CD8-positive, alpha-beta T cell (primary cell): ENCODE measurements at regions of chr16 and their contacts with region 1.

Region 1: GRCh38 chr16:69565671-69566239 is at the start of gene NFAT5:
- DNase-seq: peak; percentile 83 to 97 (median 90)
- ATAC-seq: peak; percentile 82
- H3K4me3 ChIP-seq: peak within 1 kb of the TSS; percentile 78 to 91
- H3K4me3 Mint-ChIP-seq: peak within 1 kb of the TSS; percentile 96
- H3K27ac ChIP-seq: peak within 1 kb of the TSS; percentile 87 to 89
- H3K27ac Mint-ChIP-seq: peak within 1 kb of the TSS; percentile 98
- H3K4me1 ChIP-seq: peaks cover 36% of the 10 kb centered on the region
- H3K4me1 Mint-ChIP-seq: peaks cover 46% of the 10 kb centered on the region
- H3K27me3 ChIP-seq: no peaks in the 10 kb centered on the region
- H3K27me3 Mint-ChIP-seq: no peaks in the 10 kb centered on the region
- CTCF ChIP-seq: no peak
- total RNA-seq, gene NFAT5: 22.0 to 27.6 TPM

Region 2: DNA sequence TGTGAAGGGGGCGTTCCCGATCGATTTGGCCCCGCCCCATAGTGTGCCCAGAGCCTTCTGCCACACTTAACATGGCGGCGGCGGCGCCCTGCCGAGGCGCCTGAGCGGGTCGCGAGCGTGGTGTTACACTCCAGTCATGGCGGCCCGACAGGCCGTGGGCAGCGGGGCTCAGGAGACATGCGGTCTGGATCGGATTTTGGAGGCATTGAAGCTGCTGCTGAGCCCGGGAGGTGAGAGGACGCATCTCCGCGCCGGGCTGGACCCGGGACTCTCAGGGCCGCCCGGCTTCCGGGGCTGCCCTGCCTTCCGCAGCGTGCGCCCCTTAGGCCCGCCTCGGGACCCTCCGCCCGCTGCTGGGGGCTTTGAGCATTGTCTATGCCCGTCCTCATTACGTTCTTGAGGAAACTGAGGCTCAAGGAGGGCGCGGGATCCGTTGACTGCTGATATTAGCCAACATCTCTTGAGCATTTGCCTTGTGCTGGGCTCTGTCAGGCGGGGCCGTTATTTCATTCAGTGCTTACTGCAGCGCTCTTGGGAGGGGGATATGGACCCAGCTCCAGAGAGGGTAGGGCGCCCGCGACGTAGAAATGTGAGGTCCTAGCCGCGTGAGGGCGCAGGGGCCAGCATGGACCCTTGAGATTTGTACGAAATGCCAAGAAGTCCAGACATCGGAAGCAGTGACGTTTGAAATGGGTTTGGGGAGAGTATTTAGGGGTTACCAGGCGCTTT is 722.1 kb before region 1 on chr16 and contains the start of gene TANGO6:
- CTCF ChIA-PET with region 1: no interaction called
- POLR2A ChIA-PET with region 1: no interaction called
- intact Hi-C with region 1: loop called in 1 of 2 experiments (anchors 10 kb)
- DNase-seq: peak; percentile 81 to 93 (median 90)
- ATAC-seq: peak; percentile 95
- H3K4me3 ChIP-seq: peak within 1 kb of the TSS; percentile 86 to 94
- H3K4me3 Mint-ChIP-seq: peak within 1 kb of the TSS; percentile 92
- H3K27ac ChIP-seq: peak within 1 kb of the TSS; percentile 78 to 86
- H3K27ac Mint-ChIP-seq: peak within 1 kb of the TSS; percentile 89
- H3K4me1 ChIP-seq: peaks cover 24% of the 10 kb centered on the region
- H3K4me1 Mint-ChIP-seq: peaks cover 29% of the 10 kb centered on the region
- H3K27me3 ChIP-seq: no peaks in the 10 kb centered on the region
- H3K27me3 Mint-ChIP-seq: no peaks in the 10 kb centered on the region
- CTCF ChIP-seq: no peak
- total RNA-seq, gene TANGO6: 12.1 to 16.3 TPM

Region 3: DNA sequence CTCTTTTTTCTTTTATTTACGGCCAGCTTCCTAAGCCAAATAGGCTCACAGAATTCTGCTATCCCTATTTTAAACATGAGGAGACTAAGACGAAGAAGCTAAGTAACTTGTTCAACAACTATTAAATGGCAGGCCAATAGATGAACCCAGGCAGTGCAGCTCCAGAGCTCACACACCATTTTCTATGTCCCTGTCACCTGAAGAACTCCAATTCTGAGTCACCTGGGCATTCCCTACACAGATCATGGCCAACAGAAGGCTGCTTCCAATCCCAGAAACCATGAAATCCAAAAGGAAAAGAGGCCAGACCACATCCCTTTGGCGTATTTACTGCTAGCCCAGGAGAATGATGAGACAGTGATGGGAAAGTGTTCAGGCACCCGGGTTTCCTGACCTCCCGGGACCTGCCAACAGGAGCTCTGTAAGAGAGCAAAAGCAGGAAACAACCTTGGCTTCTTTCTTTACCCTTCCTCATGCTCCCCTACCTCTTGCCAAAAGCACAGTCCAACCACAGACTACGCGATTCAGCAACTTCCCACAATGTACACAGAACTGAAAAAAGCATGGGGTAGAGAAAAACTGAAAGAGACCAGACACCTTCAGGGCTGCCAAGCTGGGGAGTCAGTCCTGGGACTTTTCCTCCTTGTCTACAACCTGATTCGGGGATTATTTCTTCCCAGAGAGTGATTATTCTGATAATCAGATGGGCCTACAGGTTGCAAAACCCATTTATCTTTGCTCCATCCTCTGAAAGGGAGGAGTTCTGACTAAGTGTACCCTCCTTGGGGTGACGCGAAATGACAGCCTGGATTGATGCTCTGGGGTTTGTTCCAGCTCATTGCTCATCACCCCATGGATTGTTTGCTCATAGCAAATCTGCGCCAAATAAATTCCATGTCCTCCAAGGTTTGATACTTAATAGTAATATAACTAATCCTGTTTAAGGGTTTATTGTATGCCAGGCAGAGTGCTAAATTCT is 508.1 kb before region 1 on chr16:
- CTCF ChIA-PET with region 1: no interaction called
- POLR2A ChIA-PET with region 1: no interaction called
- intact Hi-C with region 1: no loop called
- DNase-seq: no peak
- ATAC-seq: no peak
- H3K4me3 ChIP-seq: no peak overlapping the region
- H3K4me3 Mint-ChIP-seq: no peak overlapping the region
- H3K27ac ChIP-seq: no peak overlapping the region
- H3K27ac Mint-ChIP-seq: no peak overlapping the region
- H3K4me1 ChIP-seq: no peaks in the 10 kb centered on the region
- H3K4me1 Mint-ChIP-seq: no peaks in the 10 kb centered on the region
- H3K27me3 ChIP-seq: no peaks in the 10 kb centered on the region
- H3K27me3 Mint-ChIP-seq: no peaks in the 10 kb centered on the region
- CTCF ChIP-seq: no peak

Region 4: GRCh38 chr16:69310653-69311532 is 254.9 kb before region 1 on chr16 and contains the start of gene VPS4A:
- CTCF ChIA-PET with region 1: no interaction called
- POLR2A ChIA-PET with region 1: no interaction called
- intact Hi-C with region 1: loop called in 1 of 2 experiments (anchors 5 kb)
- DNase-seq: peak; percentile 96 to 99 (median 98)
- ATAC-seq: peak; percentile 98
- H3K4me3 ChIP-seq: peak within 1 kb of the TSS; percentile 66 to 79
- H3K4me3 Mint-ChIP-seq: peak within 1 kb of the TSS; percentile 99
- H3K27ac ChIP-seq: peak within 1 kb of the TSS; percentile 72 to 82
- H3K27ac Mint-ChIP-seq: peak within 1 kb of the TSS; percentile 95
- H3K4me1 ChIP-seq: peaks cover 17% of the 10 kb centered on the region
- H3K4me1 Mint-ChIP-seq: peaks cover 27% of the 10 kb centered on the region
- H3K27me3 ChIP-seq: no peaks in the 10 kb centered on the region
- H3K27me3 Mint-ChIP-seq: no peaks in the 10 kb centered on the region
- CTCF ChIP-seq: peak; percentile 73
- total RNA-seq, gene VPS4A: 64.2 to 66.5 TPM

Region 5: DNA sequence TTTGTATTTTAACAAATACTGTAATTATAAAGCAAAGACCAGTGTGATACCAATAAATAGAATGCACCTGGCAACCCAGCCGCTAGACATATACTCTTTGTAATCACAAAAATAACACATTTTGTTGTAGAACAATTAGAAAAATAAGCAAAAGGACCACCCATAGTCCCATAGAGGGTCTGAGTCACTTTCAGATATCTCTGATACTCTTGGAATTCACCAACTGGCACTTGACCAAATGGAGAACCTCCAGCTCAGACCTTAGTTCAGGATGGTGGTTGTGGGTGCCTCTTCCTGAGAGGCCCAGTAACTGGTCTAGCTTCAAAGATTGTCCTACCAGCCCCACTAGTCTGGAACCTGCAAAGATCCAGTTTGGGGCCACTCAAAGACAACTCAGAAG is 179.2 kb before region 1 on chr16:
- CTCF ChIA-PET with region 1: no interaction called
- POLR2A ChIA-PET with region 1: no interaction called
- intact Hi-C with region 1: loop called (anchors 1 to 2 kb)
- DNase-seq: no peak
- ATAC-seq: no peak
- H3K4me3 ChIP-seq: peak overlapping the region in 1 of 2 experiments; percentile 46
- H3K4me3 Mint-ChIP-seq: peak overlapping the region; percentile 89
- H3K27ac ChIP-seq: peak overlapping the region in 1 of 2 experiments; percentile 55
- H3K27ac Mint-ChIP-seq: no peak overlapping the region
- H3K4me1 ChIP-seq: peaks cover 12% of the 10 kb centered on the region
- H3K4me1 Mint-ChIP-seq: peaks cover 30% of the 10 kb centered on the region
- H3K27me3 ChIP-seq: no peaks in the 10 kb centered on the region
- H3K27me3 Mint-ChIP-seq: no peaks in the 10 kb centered on the region
- CTCF ChIP-seq: no peak

Region 6: DNA sequence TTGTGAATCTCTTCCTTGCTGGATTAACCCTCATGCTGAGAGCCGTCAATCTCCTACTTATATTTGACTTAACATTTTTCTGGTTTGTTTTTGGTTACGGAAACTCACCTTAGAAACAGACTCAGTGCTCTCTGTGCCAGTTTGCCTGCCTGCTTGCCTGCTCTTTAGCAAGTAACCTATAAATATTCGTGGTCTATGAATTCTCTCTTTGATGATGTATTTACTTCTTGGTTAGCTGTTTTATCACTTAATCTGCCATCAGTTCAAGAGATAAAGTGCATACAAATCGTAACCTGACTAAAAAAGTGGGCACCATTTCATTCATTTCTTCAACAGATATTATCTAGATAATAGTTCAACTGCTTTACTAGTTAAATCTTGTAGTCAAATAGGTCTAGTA is 114.6 kb before region 1 on chr16:
- CTCF ChIA-PET with region 1: no interaction called
- POLR2A ChIA-PET with region 1: no interaction called
- intact Hi-C with region 1: loop called in 1 of 2 experiments (anchors 10 kb)
- DNase-seq: no peak
- ATAC-seq: no peak
- H3K4me3 ChIP-seq: no peak overlapping the region
- H3K4me3 Mint-ChIP-seq: no peak overlapping the region
- H3K27ac ChIP-seq: no peak overlapping the region
- H3K27ac Mint-ChIP-seq: no peak overlapping the region
- H3K4me1 ChIP-seq: no peaks in the 10 kb centered on the region
- H3K4me1 Mint-ChIP-seq: peaks cover 23% of the 10 kb centered on the region
- H3K27me3 ChIP-seq: no peaks in the 10 kb centered on the region
- H3K27me3 Mint-ChIP-seq: no peaks in the 10 kb centered on the region
- CTCF ChIP-seq: no peak

Region 7: GRCh38 chr16:69672998-69673713 is 107.4 kb after region 1 on chr16:
- CTCF ChIA-PET with region 1: no interaction called
- POLR2A ChIA-PET with region 1: no interaction called
- intact Hi-C with region 1: no loop called
- DNase-seq: no peak
- ATAC-seq: no peak
- H3K4me3 ChIP-seq: no peak overlapping the region
- H3K4me3 Mint-ChIP-seq: no peak overlapping the region
- H3K27ac ChIP-seq: no peak overlapping the region
- H3K27ac Mint-ChIP-seq: no peak overlapping the region
- H3K4me1 ChIP-seq: no peaks in the 10 kb centered on the region
- H3K4me1 Mint-ChIP-seq: no peaks in the 10 kb centered on the region
- H3K27me3 ChIP-seq: no peaks in the 10 kb centered on the region
- H3K27me3 Mint-ChIP-seq: no peaks in the 10 kb centered on the region
- CTCF ChIP-seq: no peak

Region 8: DNA sequence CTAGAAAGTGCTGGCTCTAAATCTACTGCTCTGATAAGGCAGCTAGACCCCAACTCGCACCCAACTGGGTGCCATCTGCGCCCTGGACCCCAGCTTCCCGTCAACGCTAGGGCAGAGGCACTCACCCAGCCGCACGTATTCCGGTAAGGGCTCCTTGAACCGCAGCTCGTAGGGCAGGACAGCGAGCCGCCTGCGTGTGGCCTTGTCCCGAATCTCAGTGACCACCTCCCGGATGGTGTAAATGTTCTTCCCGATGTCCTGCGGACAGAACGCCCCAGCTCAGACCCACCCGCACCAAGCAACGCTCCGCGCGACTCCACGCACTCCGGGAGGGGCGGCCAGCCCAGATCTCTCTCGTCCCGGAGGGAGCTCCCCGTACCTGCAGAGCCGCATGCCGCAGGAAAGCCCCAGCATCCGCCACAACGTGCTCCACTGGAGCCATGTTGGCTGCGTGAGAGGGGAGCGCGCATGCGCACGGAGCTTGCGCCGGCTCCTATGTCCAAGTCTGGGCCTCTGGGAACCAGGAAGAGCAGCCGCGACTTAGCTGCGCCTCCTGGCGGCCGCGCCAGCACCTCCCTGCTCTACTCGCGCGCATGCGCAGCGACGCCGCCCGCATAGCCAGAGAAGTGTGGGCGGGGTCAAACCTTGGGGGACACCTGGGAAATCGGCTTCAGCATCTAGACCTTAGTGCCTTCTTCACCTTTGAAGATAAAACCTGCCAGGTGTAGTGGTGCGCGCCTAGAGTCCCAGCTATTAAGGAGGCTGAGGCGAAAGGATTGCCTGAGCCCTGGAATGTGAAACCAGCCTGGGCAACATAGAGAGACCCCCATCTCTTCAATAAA is 188.9 kb after region 1 on chr16 and contains the start of gene NOB1:
- CTCF ChIA-PET with region 1: no interaction called
- POLR2A ChIA-PET with region 1: no interaction called
- intact Hi-C with region 1: loop called in 1 of 2 experiments (anchors 5 kb)
- DNase-seq: peak; percentile 94 to 100 (median 98)
- ATAC-seq: peak; percentile 97
- H3K4me3 ChIP-seq: peak within 1 kb of the TSS; percentile 91 to 100
- H3K4me3 Mint-ChIP-seq: peak within 1 kb of the TSS; percentile 100
- H3K27ac ChIP-seq: peak within 1 kb of the TSS; percentile 78 to 84
- H3K27ac Mint-ChIP-seq: peak within 1 kb of the TSS; percentile 98
- H3K4me1 ChIP-seq: peaks cover 9% of the 10 kb centered on the region
- H3K4me1 Mint-ChIP-seq: peaks cover 29% of the 10 kb centered on the region
- H3K27me3 ChIP-seq: no peaks in the 10 kb centered on the region
- H3K27me3 Mint-ChIP-seq: no peaks in the 10 kb centered on the region
- CTCF ChIP-seq: peak; percentile 79
- total RNA-seq, gene NOB1: 46.4 to 48.0 TPM

Region 9: GRCh38 chr16:69823831-69824563 is 258.2 kb after region 1 on chr16:
- CTCF ChIA-PET with region 1: no interaction called
- POLR2A ChIA-PET with region 1: no interaction called
- intact Hi-C with region 1: no loop called
- DNase-seq: peak in 1 of 9 experiments; percentile 7
- ATAC-seq: no peak
- H3K4me3 ChIP-seq: no peak overlapping the region
- H3K4me3 Mint-ChIP-seq: no peak overlapping the region
- H3K27ac ChIP-seq: no peak overlapping the region
- H3K27ac Mint-ChIP-seq: no peak overlapping the region
- H3K4me1 ChIP-seq: no peaks in the 10 kb centered on the region
- H3K4me1 Mint-ChIP-seq: peaks cover 3% of the 10 kb centered on the region
- H3K27me3 ChIP-seq: no peaks in the 10 kb centered on the region
- H3K27me3 Mint-ChIP-seq: no peaks in the 10 kb centered on the region
- CTCF ChIP-seq: no peak

Region 10: GRCh38 chr16:70380861-70381603 is 815.3 kb after region 1 on chr16:
- CTCF ChIA-PET with region 1: no interaction called
- POLR2A ChIA-PET with region 1: no interaction called
- intact Hi-C with region 1: loop called in 1 of 2 experiments (anchors 5 kb)
- DNase-seq: peak; percentile 90 to 98 (median 96)
- ATAC-seq: peak; percentile 91
- H3K4me3 ChIP-seq: peak overlapping the region; percentile 67 to 84
- H3K4me3 Mint-ChIP-seq: peak overlapping the region; percentile 95
- H3K27ac ChIP-seq: peak overlapping the region; percentile 73 to 79
- H3K27ac Mint-ChIP-seq: peak overlapping the region; percentile 95
- H3K4me1 ChIP-seq: peaks cover 10% of the 10 kb centered on the region
- H3K4me1 Mint-ChIP-seq: peaks cover 21% of the 10 kb centered on the region
- H3K27me3 ChIP-seq: no peaks in the 10 kb centered on the region
- H3K27me3 Mint-ChIP-seq: no peaks in the 10 kb centered on the region
- CTCF ChIP-seq: no peak